Activated naive CD4-positive, alpha-beta T cell treated with anti-CD3 and anti-CD28 coated beads, Interleukin-2, amount 10 ng/mL, durations not matched to agents 7 days and 5 days (primary cell): ENCODE measurements at regions of chr15 and their contacts with region 1.

Region 1: DNA sequence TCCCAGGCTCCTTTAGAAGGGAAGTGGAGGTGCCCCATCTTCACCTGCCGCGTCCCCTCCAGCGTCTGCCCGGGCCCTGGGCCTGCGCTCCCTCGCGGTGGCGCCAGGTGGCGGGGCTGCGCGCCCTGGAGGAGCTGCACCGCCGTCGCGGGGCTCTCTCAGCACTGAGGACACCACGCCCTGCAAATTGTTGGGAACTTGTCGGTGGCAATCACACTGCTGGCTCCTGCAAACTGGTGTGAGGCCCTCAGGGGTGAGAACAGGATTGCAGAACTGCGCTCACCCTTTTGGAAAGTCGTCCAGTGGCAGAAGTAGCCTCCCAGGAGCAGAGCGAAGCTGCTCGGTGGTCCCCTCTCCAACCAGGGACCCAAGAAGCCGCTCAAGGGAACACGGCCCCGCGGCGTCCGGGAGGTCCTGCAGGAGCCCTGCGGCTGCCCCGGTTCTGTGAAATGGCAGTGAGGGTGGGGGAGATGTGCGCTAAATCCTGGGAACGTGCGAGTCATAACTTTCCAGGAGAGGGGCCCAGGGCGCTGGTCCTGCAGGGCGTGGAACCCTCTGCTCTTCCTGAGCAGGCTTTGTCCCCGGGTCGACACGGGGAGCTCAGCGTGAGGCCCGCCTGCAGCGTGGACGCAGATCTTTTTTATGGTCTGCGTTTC is 995 bp upstream of the LRRK1 start:
- DNase-seq: peak; percentile 78
- H3K4me3 Mint-ChIP-seq: peak overlapping the region; percentile 68
- H3K27ac Mint-ChIP-seq: no peak overlapping the region
- H3K4me1 Mint-ChIP-seq: peaks cover 29% of the 10 kb centered on the region
- H3K27me3 Mint-ChIP-seq: peaks cover 82% of the 10 kb centered on the region

Region 2: DNA sequence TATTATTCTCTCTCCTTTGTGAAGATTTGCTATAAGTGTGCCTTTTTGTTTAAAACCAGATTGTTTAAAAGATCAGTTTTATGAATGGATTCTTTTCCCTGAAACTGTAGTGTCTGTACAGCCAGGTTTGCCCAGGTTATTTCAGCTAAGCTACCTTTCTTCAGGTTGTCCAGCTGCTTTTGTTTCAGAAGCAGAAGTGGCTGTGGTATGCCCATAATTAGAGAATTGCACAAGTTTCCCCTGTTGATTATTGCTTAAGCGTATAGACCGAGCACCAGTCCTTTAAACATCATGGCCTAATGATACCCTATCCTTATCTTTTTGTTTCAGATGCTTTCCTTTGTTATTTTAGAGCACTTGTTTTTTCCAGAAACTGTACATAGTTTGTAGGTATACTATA is 305.6 kb before region 1 on chr15:
- CTCF ChIA-PET with region 1: no interaction called
- DNase-seq: no peak
- H3K4me3 Mint-ChIP-seq: no peak overlapping the region
- H3K27ac Mint-ChIP-seq: no peak overlapping the region
- H3K4me1 Mint-ChIP-seq: peaks cover 14% of the 10 kb centered on the region
- H3K27me3 Mint-ChIP-seq: no peaks in the 10 kb centered on the region

Region 3: DNA sequence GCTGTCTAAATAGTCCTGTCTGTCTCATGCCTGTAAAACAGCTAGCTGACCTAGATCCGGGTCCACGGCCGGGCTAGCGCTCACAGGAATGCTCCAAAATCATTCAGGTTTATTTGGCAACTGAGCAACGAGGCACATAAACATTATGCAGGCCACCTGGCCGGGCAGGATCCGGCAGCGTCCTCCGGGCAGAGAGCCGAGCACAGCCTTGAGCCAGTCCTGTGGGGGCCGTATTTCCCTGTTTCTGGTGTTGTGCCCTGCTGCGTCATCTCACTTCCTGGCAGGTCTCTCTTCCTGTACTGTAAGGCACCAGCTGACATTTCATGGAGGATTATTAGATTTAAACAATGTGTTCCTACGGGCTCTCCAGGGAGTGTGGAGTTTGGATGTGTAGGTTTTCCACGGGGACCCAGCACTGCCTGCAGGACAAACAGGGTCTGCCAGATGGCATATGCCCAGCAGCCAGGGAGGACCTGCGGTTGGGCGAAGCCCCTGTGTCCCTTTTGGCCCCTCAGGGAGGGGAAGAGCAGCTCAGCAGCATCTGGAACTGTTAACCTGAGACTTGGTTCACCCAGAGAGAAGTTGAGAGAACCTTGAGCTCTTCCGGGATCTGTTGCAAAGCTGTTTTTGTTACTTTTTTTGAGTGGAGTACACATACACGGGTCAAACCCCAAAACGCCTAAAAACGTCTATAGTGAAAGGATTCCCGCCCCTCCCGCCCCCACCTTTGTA is 15.6 kb before region 1 on chr15:
- CTCF ChIA-PET with region 1: interaction called, 14 read pairs
- DNase-seq: no peak
- H3K4me3 Mint-ChIP-seq: no peak overlapping the region
- H3K27ac Mint-ChIP-seq: no peak overlapping the region
- H3K4me1 Mint-ChIP-seq: no peaks in the 10 kb centered on the region
- H3K27me3 Mint-ChIP-seq: peaks cover 40% of the 10 kb centered on the region